Activated T-helper 1 cell treated with anti-CD3 and anti-CD28 coated beads, Interleukin-12 subunit alpha, Interleukin-12 subunit beta, Interleukin-2, Interleukin-4 antibody, amounts not matched to agents 30 ng/mL and 10 ng/mL and 1 ng/mL, durations not matched to agents 14 hours and 24 hours and 36 hours (primary cell): ENCODE measurements at regions of chr5 and their contacts with region 1.

Region 1: DNA sequence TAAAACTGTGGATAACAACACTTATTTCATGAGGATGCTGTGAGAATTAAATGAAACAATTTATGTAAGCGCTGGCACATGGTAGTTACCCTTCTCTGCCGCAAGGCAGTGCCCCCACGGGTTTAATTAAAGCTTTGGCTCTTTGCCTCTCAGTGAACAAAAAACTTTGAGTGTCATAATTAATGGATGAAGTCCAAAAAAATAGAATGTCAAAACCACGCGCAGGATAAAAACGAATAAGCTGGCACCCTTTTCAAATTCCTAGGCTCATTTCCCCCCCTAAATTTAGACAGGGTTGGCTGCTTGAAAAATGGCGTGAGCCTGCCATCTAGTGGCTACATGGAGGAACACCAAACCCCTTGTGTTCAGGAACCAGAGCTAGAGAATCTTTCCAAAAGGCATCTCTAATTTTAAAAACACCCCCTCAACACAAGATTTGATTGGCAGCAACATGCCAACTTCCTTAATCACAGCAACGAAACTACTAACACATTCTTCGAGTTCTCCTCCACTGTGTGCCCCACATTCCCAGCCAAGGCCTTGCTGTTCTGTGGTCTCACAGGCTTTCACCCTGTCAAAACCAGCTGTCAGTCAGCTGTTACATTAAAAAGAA is 29.0 kb upstream of the CCNG1 start:
- DNase-seq: peak; percentile 7
- H3K4me3 Mint-ChIP-seq: no peak overlapping the region
- H3K27ac Mint-ChIP-seq: no peak overlapping the region
- H3K4me1 Mint-ChIP-seq: peaks cover 6% of the 10 kb centered on the region
- H3K27me3 Mint-ChIP-seq: peaks cover 12% of the 10 kb centered on the region

Region 2: DNA sequence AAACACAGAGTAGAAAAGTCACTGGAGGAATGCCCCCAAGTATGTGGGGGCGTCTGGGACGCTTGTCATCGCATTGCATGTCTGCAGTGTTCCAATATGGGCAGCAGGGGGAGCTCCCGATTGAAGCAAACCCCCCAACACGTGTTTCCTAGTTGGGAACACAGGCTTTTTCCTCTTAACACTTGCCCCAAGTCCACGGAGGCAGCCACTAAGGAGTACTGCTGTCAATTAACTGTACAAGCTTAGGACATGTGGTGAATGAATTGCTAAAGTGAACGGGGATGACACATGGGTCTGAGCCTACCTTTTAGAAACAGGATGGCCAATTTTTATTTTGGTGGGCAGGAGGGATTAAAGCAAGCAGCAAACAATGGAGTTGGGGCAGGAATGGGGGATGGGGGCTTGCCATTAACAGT is 1864.1 kb before region 1 on chr5:
- intact Hi-C with region 1: loop called (anchors 5 kb)
- DNase-seq: no peak
- H3K4me3 Mint-ChIP-seq: no peak overlapping the region
- H3K27ac Mint-ChIP-seq: peak overlapping the region; percentile 6
- H3K4me1 Mint-ChIP-seq: peaks cover 22% of the 10 kb centered on the region
- H3K27me3 Mint-ChIP-seq: peaks cover 40% of the 10 kb centered on the region

Region 3: DNA sequence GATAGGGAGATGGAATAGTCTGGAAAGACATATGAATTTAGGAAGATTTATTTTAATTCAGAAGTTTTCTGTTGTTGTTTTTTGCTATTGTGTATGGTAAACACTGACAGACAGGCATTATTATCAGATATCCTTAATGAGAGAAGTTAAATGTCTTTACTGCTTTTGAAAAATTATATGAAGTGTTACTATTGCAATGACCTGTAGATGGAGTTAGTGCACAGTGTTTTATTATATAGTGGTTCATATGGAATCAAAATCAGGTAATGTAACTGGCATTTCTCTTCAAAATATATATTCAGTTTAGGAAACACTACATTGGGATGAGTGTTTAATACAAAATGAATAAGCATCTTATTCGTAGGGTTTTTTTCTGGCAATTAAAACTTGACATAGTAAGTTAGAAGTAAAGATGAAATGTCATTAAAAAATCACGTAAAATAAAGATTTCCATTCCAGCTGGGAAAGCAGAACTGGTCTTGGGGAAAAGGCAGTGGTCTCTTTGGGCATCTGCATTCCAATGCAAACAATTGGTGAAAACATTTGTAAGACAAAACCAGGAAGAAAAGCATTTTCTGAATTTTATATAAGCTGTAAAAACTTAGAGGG is 1556.6 kb before region 1 on chr5:
- intact Hi-C with region 1: loop called (anchors 5 kb)
- DNase-seq: no peak
- H3K4me3 Mint-ChIP-seq: no peak overlapping the region
- H3K27ac Mint-ChIP-seq: no peak overlapping the region
- H3K4me1 Mint-ChIP-seq: no peaks in the 10 kb centered on the region
- H3K27me3 Mint-ChIP-seq: peaks cover 9% of the 10 kb centered on the region

Region 4: DNA sequence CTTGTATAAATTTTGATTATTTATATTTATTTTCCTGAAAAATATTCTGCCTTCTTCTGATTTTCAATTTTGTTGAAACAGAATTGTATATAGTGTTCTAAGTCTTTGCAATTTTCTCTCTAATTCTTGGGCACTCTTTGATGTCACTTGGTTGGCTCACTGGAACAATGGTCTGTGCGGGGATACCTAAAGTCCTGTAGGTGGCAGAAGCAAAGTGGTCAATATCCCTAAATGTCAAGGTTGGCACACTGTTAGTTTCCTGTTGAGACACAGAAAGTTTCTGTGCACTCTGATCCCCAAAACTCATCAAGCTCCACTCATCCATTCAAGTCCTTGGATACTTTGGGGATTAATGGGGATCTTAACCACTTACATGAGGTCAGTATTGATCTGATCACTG is 451.8 kb before region 1 on chr5:
- intact Hi-C with region 1: no loop called
- DNase-seq: no peak
- H3K4me3 Mint-ChIP-seq: no peak overlapping the region
- H3K27ac Mint-ChIP-seq: no peak overlapping the region
- H3K4me1 Mint-ChIP-seq: no peaks in the 10 kb centered on the region
- H3K27me3 Mint-ChIP-seq: no peaks in the 10 kb centered on the region

Region 5: GRCh38 chr5:163104464-163104863 is 304.0 kb before region 1 on chr5:
- intact Hi-C with region 1: loop called (anchors 2 kb)
- DNase-seq: no peak
- H3K4me3 Mint-ChIP-seq: no peak overlapping the region
- H3K27ac Mint-ChIP-seq: no peak overlapping the region
- H3K4me1 Mint-ChIP-seq: no peaks in the 10 kb centered on the region
- H3K27me3 Mint-ChIP-seq: no peaks in the 10 kb centered on the region

Region 6: GRCh38 chr5:163306421-163306820 is 102.0 kb before region 1 on chr5:
- intact Hi-C with region 1: loop called (anchors 1 kb)
- DNase-seq: no peak
- H3K4me3 Mint-ChIP-seq: no peak overlapping the region
- H3K27ac Mint-ChIP-seq: no peak overlapping the region
- H3K4me1 Mint-ChIP-seq: peaks cover 14% of the 10 kb centered on the region
- H3K27me3 Mint-ChIP-seq: peaks cover 6% of the 10 kb centered on the region

Region 7: DNA sequence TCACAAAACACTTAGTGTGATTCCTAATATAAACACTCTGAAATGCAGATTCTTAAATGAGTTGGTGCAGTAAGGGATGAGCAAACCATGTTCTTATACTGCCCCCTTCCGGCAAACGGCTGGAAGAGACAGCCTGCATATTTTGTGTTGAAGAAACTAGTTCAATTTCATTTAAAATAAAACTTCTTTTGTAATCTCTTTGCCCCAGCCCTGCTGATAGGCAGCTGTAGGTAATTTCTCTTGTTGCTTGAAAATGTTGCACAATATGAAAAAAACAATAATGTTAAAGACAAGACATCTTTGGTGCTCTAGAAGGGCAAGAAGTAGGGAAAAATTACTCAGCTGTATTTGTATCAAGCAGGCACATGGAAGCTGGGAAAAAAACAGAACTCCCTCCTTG is 60.7 kb before region 1 on chr5:
- intact Hi-C with region 1: loop called (anchors 1 kb)
- DNase-seq: peak; percentile 19
- H3K4me3 Mint-ChIP-seq: no peak overlapping the region
- H3K27ac Mint-ChIP-seq: no peak overlapping the region
- H3K4me1 Mint-ChIP-seq: no peaks in the 10 kb centered on the region
- H3K27me3 Mint-ChIP-seq: peaks cover 6% of the 10 kb centered on the region